Posterior vena cava (tissue), 2 donors: ENCODE measurements at regions of chr3 and their contacts with region 1.

Region 1: DNA sequence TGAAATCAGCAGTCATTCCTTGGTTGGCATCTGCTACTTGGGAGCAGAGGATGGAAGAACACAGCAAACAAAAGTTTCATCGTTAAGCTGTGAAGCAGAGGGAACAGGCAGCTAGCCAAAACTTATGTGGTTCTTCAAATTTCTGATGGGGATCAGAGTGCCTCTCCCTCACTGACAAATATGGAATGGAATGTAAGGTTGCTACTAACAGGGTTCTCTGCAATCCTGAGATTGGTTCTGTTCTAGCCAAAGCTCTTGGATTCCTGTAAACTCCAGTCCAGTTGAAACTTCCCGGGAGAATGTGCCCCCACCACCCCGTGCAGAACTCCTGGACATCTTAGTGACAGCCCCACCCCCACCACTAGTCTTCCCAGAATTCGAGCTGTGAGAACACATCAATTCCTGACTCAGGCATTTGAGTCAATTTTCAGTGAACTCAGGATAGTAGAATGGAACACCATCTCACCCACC is 55.9 kb upstream of the PHLDB2 start:
- DNase-seq: peak; percentile 93

Region 2: GRCh38 chr3:111723293-111724215 is 79.6 kb before region 1 on chr3:
- intact Hi-C with region 1: loop called in 1 of 2 experiments (anchors 10 kb)
- DNase-seq: no peak

Region 3: DNA sequence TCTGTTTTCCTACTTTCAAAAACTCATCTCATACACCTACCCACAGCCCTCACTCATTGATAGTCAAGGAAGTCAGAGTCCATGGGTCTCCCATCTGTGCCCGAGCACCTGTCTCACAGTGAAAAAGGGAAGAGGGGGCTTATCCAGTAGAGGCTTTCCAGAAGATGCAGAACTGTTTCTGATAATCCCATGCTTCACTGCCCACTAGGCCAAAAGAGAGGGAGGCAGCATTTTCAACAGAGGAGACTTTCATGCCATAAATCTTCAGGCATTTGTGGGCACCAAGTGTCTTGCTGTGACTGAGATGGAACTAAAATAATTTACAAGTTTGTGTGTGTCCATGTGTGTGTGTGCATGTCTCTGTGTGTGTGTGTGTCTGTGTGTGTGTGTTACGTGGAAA is 62.0 kb before region 1 on chr3:
- intact Hi-C with region 1: loop called in 1 of 2 experiments (anchors 2 kb)
- DNase-seq: no peak

Region 4: DNA sequence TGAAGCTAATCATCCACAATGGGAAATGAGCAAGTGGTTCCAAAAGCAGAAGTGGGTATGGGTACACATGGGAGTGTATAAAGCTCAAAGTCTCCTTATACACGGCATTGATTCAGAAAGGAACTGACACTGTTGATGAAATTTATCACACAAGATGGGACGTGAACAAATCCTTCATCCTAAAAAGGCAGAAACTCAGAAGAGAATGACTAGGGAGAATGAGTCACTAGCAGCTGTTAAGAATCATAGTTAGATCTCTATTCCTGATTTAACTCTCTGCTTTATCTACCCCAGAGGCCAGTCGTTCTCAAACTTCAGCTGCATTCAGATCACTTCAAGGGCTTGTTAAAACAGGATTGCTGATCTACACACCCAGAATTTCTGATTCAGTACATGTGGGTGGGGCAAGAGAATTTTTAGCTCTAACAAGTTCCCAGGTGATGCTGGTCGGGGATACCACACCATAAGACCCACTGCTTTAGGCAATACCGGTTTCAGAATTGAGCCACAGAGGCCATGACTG is 41.8 kb before region 1 on chr3:
- intact Hi-C with region 1: loop called in 1 of 2 experiments (anchors 5 kb)
- DNase-seq: no peak